Ovary (tissue), 10 donors: ENCODE measurements at regions of chr1 and their contacts with region 1.

Region 1: DNA sequence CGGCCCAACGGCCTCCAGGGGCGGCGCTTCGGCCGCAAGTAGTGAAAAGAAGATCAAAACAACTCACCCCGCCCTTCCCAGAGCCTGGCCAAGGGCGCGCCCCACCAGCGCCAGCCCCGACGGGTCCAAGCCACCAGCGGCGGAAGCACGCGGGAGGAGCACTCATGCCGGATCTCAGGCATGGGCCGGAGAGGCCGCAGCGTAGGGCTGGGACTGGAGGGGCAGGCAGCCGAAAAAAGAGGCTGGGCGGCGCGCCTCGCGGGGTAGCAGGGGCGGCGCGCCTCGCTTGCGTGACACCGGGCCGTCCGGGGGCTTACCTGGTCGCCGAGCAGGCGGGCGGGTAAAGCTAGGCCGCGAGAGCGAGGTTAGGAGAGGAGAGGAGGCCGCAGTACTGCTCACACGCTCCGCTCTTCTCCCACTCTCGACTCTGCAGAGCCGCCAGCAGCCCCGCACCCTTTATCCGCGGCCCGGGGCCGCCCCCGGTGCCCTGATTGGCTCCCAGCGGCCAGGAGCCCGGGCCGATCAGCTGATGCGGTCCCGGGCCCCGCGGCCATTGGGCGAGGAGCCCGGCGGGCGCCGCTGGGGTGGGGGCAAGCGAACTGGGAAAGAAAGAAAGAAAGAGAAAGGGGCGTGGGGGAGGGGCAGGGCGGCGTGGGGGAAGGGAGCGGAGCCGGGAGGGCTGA is at the start of gene GLUL:
- DNase-seq: peak; percentile 97 to 98 (median 97)
- H3K4me3 ChIP-seq: peak within 1 kb of the TSS; percentile 88
- H3K27ac ChIP-seq: peak within 1 kb of the TSS; percentile 93 to 95
- H3K4me1 ChIP-seq: peaks cover 8% of the 10 kb centered on the region
- H3K27me3 ChIP-seq: no peaks in the 10 kb centered on the region
- CTCF ChIP-seq: peak; percentile 16 to 50 (median 26)
- EP300 ChIP-seq: no peak
- POLR2A ChIP-seq: peak; percentile 99
- total RNA-seq, gene GLUL: 605 to 1,338 (median 1,071) TPM

Region 2: GRCh38 chr1:182198049-182198501 is 193.4 kb before region 1 on chr1:
- intact Hi-C with region 1: loop called in 2 of 4 experiments (anchors 2 to 10 kb)
- DNase-seq: no peak
- H3K4me3 ChIP-seq: no peak overlapping the region
- H3K27ac ChIP-seq: peak overlapping the region; percentile 24 to 78
- H3K4me1 ChIP-seq: peaks cover 13% of the 10 kb centered on the region
- H3K27me3 ChIP-seq: no peaks in the 10 kb centered on the region
- CTCF ChIP-seq: peak in 1 of 3 donors; percentile 27
- EP300 ChIP-seq: no peak
- POLR2A ChIP-seq: no peak

Region 3: DNA sequence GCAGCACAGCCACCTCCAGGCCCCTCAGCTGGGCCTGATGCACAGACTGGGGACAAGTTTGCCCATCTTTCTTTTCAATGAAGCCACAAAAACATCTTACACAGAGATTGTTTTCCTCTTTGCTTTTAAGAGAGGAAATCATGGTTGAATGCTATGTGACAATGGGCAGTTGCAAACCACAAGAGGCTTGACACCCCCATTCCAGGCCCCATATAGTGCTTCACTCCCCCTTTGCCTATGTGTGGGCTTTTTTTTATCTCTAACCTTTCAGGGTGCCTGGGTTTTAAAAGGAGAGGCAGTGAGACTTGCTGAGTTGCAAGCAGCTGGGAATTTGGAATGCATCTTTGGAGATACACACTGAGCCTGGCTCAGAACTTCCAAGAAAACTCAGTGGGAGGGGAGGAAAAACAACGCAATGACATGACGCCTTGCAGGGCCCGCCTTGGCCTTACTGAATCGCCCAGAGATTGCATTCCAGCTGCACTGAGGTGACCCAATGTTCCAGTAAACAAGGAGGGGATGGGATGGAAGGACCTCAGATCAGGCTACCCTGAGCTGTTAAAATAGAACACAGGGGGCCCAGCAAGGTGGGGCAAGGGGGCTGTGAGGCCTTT is 184.8 kb before region 1 on chr1:
- intact Hi-C with region 1: loop called in 3 of 4 experiments (anchors 2 to 10 kb)
- DNase-seq: peak; percentile 79 to 92 (median 87)
- H3K4me3 ChIP-seq: no peak overlapping the region
- H3K27ac ChIP-seq: peak overlapping the region; percentile 47 to 86
- H3K4me1 ChIP-seq: peaks cover 19% of the 10 kb centered on the region
- H3K27me3 ChIP-seq: no peaks in the 10 kb centered on the region
- CTCF ChIP-seq: no peak
- EP300 ChIP-seq: peak; percentile 89
- POLR2A ChIP-seq: peak; percentile 31